AG04449 (cell line): ENCODE measurements at regions of chr10 and their contacts with region 1.

Region 1: DNA sequence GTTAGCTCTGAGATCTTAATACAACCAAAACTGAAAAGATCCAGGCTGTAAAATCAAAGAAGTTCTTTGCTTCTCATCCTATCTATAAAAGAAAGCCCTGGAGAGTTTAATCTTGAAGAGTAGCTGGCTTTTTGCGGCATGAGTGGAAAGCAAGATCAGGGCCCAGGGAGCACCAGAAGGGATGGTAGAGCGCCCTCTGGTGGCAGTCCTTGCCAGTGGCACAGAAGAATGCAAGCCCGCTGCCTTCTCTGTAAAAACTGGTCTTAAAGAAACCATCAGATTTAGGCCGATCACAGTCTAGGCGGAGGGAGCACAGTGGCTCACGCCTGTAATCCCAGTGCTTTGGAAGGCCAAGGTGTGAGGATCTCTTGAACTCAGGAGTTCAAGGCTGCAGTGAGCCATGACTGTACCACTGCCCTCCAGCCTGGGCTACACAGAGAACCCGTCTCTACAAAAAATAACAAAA is 35.6 kb downstream of the CPN1 start:
- DNase-seq: peak; percentile 42
- H3K4me3 ChIP-seq: no peak overlapping the region
- CTCF ChIP-seq: peak; percentile 89

Region 2: GRCh38 chr10:99872367-99873162 is 173.5 kb before region 1 on chr10:
- CTCF ChIA-PET with region 1: interaction called, 23 read pairs
- POLR2A ChIA-PET with region 1: no interaction called
- DNase-seq: no peak
- H3K4me3 ChIP-seq: no peak overlapping the region
- CTCF ChIP-seq: no peak

Region 3: DNA sequence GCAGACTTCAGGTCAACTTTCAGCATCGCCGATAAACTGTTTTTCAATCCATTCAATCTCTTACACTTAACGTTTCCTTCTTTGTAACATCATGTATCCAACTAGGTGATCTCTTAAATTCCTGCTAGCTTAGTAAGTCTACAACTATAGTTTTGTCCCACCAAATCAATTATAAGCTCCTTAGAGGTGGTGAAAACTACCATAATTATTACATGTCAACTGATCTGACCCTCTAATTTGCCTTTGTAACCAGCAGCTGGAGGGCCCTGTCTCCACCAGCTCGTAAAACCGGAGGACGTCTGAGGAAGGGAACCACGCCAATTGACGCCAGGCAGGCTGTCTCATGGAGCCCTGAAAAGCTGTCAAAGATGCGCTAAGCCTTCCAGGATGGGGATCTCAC is 150.2 kb before region 1 on chr10:
- CTCF ChIA-PET with region 1: interaction called, 12 read pairs
- POLR2A ChIA-PET with region 1: no interaction called
- DNase-seq: no peak
- H3K4me3 ChIP-seq: no peak overlapping the region
- CTCF ChIP-seq: no peak

Region 4: DNA sequence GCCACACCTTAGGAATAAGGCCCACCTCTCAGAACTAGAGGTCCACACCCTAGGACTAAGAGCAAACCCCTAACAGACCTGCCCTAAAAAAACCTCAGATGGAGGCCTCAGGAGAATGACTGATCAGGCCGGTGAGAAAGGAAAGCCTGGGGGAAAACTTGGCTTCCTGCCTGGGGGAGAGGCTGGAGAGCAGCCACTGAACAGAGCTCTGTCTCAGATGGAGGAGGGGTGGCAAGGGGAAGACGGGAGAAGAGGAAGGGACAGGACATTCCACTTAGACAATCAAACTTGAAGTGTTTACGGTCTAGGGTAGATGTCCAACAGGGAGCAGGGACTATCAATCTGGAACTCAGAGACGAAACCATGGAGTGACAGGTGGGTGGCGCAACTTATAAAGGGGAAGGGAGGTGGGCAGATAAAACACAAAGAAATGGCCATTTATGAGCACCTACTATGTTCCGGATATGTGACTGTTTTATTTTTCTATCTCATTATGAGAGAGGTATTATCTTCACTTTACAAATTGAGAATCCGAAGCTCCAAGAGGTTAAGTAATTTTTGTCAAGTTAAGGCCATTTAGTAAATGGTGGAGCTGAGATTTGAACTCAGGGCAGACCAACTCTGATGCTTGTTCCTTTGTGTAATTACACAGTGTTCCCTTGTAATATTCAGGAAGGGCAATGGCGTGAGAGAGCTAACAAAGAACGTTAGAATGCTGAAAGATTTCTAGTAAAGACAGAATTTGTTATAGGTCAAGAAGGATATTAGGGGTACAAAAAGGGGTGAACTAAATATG is 118.9 kb before region 1 on chr10:
- CTCF ChIA-PET with region 1: interaction called, 11 read pairs
- POLR2A ChIA-PET with region 1: interaction called, 3 read pairs
- DNase-seq: no peak
- H3K4me3 ChIP-seq: no peak overlapping the region
- CTCF ChIP-seq: no peak

Region 5: DNA sequence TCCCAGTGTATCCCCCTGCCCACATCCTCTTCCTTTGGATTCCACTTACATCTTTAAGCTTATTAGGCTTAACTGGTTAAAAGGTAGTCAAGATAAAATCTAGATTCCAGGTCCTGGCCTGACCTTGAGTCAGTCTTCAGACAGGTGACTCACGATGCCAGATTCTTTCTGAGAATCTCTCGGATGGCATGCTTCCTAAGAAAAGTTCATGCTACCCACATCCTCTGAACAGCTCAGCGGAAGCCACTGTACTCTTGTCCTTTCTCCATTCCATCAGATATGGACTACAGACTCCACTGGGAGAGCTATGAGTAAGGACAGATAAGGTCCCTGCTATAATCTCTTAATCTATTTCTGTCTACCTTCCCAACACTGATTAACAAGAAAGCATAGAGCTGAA is 79.7 kb before region 1 on chr10:
- CTCF ChIA-PET with region 1: interaction called, 28 read pairs
- POLR2A ChIA-PET with region 1: no interaction called
- DNase-seq: peak; percentile 74
- H3K4me3 ChIP-seq: no peak overlapping the region
- CTCF ChIP-seq: no peak

Region 6: GRCh38 chr10:100009793-100010676 is 36.0 kb before region 1 on chr10 and contains the start of gene DNMBP:
- CTCF ChIA-PET with region 1: interaction called, 69 read pairs
- POLR2A ChIA-PET with region 1: no interaction called
- DNase-seq: no peak
- H3K4me3 ChIP-seq: peak within 1 kb of the TSS; percentile 85
- CTCF ChIP-seq: peak; percentile 43

Region 7: DNA sequence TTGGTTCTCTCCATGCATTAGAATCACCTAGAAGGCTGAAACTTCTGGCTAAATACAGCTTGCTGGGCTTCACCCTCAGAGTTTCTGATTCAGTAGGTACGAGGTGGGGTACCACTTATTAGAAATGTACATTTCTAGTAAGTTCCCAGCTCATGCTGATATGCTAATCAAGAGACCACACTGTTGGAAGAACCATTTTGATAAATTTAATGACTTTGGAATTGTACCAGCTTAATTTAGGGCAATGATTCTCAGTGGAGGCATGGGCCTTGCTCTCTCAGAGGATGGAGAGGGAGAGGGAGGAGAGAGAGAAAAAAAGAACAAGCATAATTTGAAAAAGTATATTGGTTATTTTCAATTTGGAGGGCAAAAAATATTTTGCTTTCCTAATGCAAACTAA is 15.3 kb after region 1 on chr10:
- CTCF ChIA-PET with region 1: interaction called, 19 read pairs
- POLR2A ChIA-PET with region 1: no interaction called
- DNase-seq: no peak
- H3K4me3 ChIP-seq: no peak overlapping the region
- CTCF ChIP-seq: no peak

Region 8: GRCh38 chr10:100229819-100230422 is 183.9 kb after region 1 on chr10:
- CTCF ChIA-PET with region 1: no interaction called
- POLR2A ChIA-PET with region 1: no interaction called
- DNase-seq: no peak
- H3K4me3 ChIP-seq: peak overlapping the region; percentile 98
- CTCF ChIP-seq: no peak